Calu3 (cell line): ENCODE measurements at regions of chr2 and their contacts with region 1.

Region 1: GRCh38 chr2:27217217-27218121 is at the start of gene CAD:
- DNase-seq: peak; percentile 90
- H3K4me3 Mint-ChIP-seq: peak within 1 kb of the TSS; percentile 88
- H3K27ac Mint-ChIP-seq: peak within 1 kb of the TSS; percentile 82
- H3K4me1 Mint-ChIP-seq: peaks cover 38% of the 10 kb centered on the region
- H3K27me3 Mint-ChIP-seq: no peaks in the 10 kb centered on the region
- CTCF ChIP-seq: no peak
- total RNA-seq, gene CAD: 68.2 and 71.6 TPM in 2 replicates

Region 2: DNA sequence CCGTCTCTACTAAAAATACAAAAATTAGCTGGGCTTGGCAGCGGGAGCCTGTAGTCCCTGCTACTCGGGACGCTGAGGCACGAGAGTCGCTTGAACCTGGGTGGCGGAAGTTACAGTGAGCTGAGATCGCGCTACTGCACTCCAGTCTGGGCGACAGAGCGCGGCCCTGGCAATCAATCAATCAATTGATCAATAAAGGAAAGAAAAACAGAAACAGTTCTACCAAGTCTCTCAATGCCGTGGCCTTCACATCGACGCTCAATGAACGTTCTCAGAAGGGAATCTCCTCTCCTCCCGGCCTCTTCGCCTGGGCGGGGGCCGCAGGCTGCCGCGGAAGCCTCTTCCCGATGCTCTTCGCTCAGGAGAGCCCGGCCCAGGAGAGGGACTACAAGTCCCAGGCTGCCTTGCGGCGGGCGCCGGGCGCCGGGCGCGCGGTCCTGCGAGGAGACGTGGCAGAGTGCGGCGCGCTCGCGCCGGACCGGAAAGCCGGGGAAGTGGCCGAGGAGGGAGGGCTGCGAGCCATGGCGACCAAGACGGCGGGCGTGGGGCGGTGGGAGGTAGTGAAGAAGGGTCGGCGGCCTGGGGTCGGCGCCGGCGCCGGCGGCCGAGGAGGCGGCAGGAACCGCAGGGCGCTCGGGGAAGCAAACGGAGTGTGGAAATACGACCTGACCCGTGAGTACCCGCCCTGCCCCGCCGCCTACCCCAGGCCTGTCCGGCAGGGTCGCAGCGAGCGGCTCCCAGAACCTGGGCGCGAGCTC is 184.8 kb before region 1 on chr2 and contains the start of gene TMEM214:
- CTCF ChIA-PET with region 1: no interaction called
- intact Hi-C with region 1: no loop called
- DNase-seq: peak; percentile 88
- H3K4me3 Mint-ChIP-seq: peak within 1 kb of the TSS; percentile 94
- H3K27ac Mint-ChIP-seq: peak within 1 kb of the TSS; percentile 61
- H3K4me1 Mint-ChIP-seq: peaks cover 26% of the 10 kb centered on the region
- H3K27me3 Mint-ChIP-seq: no peaks in the 10 kb centered on the region
- CTCF ChIP-seq: no peak
- total RNA-seq, gene TMEM214: 75.9 and 79.6 TPM in 2 replicates

Region 3: DNA sequence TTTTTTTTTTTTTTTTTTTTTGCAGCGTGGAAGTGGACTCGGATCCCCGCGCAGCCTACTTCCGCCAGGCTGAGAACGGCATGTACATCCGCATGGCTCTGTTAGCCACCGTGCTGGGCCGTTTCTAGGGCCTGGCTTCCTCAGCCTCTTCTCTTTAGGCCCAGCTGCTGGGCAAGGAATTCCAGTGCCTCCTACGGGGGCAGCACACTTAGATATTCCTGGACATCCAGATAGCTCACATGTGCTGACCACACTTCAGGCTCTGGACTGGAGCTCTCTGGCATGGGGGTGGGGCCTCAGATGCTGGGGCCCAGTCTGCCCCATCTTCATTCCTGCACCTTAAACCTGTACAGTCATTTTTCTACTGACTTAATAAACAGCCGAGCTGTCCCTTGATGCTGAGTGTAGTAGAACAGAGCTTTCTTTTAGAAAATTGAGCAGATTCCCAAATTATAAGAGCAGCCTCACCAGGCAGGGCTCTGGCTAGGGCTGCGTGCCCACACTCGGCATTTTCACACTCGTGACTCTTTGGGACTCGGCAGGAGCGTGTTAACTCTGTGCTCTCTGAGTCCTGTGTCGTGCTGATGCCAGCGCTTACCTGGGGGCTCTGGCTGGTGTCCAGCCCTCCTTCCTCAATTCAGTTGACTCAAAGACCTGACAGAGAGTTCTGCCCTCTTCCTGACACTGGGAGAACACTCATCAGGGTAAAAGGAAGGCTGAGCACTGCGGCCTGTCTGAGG is 26.1 kb after region 1 on chr2:
- CTCF ChIA-PET with region 1: interaction called, 10 read pairs
- intact Hi-C with region 1: no loop called
- DNase-seq: no peak
- H3K4me3 Mint-ChIP-seq: no peak overlapping the region
- H3K27ac Mint-ChIP-seq: no peak overlapping the region
- H3K4me1 Mint-ChIP-seq: no peaks in the 10 kb centered on the region
- H3K27me3 Mint-ChIP-seq: peaks cover 17% of the 10 kb centered on the region
- CTCF ChIP-seq: no peak

Region 4: GRCh38 chr2:27409321-27410073 is 192.0 kb after region 1 on chr2 and contains the start of gene PPM1G:
- CTCF ChIA-PET with region 1: no interaction called
- intact Hi-C with region 1: no loop called
- DNase-seq: peak; percentile 98
- H3K4me3 Mint-ChIP-seq: peak within 1 kb of the TSS; percentile 97
- H3K27ac Mint-ChIP-seq: peak within 1 kb of the TSS; percentile 83
- H3K4me1 Mint-ChIP-seq: peaks cover 26% of the 10 kb centered on the region
- H3K27me3 Mint-ChIP-seq: no peaks in the 10 kb centered on the region
- CTCF ChIP-seq: no peak
- total RNA-seq, gene PPM1G: 118 and 121 TPM in 2 replicates